T-cell (primary cell): ENCODE measurements at regions of chr11 and their contacts with region 1.

Region 1: GRCh38 chr11:128630367-128631230 is 43.2 kb upstream of the ETS1 start:
- DNase-seq: peak; percentile 71 to 97 (median 89)
- ATAC-seq: peak; percentile 73 to 84 (median 78)
- H3K4me3 ChIP-seq: no peak overlapping the region
- H3K4me3 Mint-ChIP-seq: peak overlapping the region; percentile 46 to 70 (median 53)
- H3K27ac ChIP-seq: peak overlapping the region; percentile 78
- H3K27ac Mint-ChIP-seq: peak overlapping the region; percentile 99 to 100
- H3K4me1 ChIP-seq: peaks cover 53 to 57% of the 10 kb centered on the region in 2 experiments
- H3K4me1 Mint-ChIP-seq: peaks cover 65 to 71% (median 68%) of the 10 kb centered on the region in 3 donors
- H3K27me3 ChIP-seq: no peaks in the 10 kb centered on the region
- H3K27me3 Mint-ChIP-seq: no peaks in the 10 kb centered on the region

Region 2: DNA sequence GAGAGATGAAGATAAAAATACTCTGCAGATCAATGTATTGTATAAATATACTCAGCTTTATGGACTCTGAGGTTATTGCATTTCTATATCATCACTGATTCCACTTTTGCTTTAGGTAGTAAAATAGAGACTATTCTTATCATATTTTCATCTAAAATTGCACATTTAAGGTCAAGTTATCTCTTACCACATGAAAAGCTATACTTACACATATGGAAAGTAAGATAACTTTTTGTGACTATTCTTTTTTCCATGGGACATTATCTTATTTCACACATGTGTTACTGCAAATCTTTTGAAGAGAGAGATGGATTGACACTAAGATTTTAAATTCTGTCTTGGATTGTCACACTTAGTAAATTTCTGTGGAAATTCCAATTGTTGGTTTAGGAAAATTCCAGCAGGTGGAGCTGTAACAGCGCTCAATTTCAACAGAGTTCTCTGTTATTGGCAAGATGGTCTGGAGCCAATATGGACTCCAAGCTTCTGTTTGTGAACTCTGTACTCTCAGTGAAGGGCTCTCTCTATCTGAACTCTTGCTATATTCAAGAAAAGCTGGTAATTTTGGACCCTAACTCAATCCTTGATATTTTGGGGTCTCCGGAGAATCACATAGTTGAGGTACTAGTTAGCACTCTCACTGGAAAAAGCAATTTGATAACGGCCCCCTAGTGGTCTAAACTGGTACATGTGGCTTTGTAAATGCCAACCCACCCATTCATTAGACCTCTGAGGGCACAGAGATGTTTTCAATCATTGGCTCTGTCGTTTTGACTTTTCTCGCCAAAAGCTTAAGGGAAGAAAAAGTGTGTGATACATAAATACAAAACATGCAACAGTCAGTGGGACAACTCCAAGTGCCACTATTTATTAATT is 472.9 kb before region 1 on chr11:
- CTCF ChIA-PET with region 1: interaction called, 4 to 13 read pairs
- POLR2A ChIA-PET with region 1: no interaction called
- DNase-seq: peak in 34 of 35 experiments; percentile 1 to 84 (median 42)
- ATAC-seq: peak; percentile 87 to 93 (median 88)
- H3K4me3 ChIP-seq: peak overlapping the region; percentile 25 to 32
- H3K4me3 Mint-ChIP-seq: peak overlapping the region; percentile 51 to 76 (median 59)
- H3K27ac ChIP-seq: no peak overlapping the region
- H3K27ac Mint-ChIP-seq: peak overlapping the region; percentile 65 to 75
- H3K4me1 ChIP-seq: no peaks in the 10 kb centered on the region
- H3K4me1 Mint-ChIP-seq: peaks cover 0 to 9% (median 3%) of the 10 kb centered on the region in 3 donors
- H3K27me3 ChIP-seq: no peaks in the 10 kb centered on the region
- H3K27me3 Mint-ChIP-seq: no peaks in the 10 kb centered on the region

Region 3: GRCh38 chr11:128290106-128290840 is 340.3 kb before region 1 on chr11:
- CTCF ChIA-PET with region 1: interaction called, 8 to 109 read pairs
- POLR2A ChIA-PET with region 1: interaction called, 3 to 4 read pairs
- DNase-seq: peak; percentile 55 to 94 (median 67)
- ATAC-seq: peak; percentile 71 to 75 (median 72)
- H3K4me3 ChIP-seq: peak overlapping the region; percentile 54 to 60
- H3K4me3 Mint-ChIP-seq: peak overlapping the region; percentile 87 to 91 (median 91)
- H3K27ac ChIP-seq: peak overlapping the region; percentile 99
- H3K27ac Mint-ChIP-seq: peak overlapping the region; percentile 98 to 100
- H3K4me1 ChIP-seq: peaks cover 58 to 67% of the 10 kb centered on the region in 2 experiments
- H3K4me1 Mint-ChIP-seq: peaks cover 93 to 100% (median 98%) of the 10 kb centered on the region in 3 donors
- H3K27me3 ChIP-seq: no peaks in the 10 kb centered on the region
- H3K27me3 Mint-ChIP-seq: no peaks in the 10 kb centered on the region

Region 4: DNA sequence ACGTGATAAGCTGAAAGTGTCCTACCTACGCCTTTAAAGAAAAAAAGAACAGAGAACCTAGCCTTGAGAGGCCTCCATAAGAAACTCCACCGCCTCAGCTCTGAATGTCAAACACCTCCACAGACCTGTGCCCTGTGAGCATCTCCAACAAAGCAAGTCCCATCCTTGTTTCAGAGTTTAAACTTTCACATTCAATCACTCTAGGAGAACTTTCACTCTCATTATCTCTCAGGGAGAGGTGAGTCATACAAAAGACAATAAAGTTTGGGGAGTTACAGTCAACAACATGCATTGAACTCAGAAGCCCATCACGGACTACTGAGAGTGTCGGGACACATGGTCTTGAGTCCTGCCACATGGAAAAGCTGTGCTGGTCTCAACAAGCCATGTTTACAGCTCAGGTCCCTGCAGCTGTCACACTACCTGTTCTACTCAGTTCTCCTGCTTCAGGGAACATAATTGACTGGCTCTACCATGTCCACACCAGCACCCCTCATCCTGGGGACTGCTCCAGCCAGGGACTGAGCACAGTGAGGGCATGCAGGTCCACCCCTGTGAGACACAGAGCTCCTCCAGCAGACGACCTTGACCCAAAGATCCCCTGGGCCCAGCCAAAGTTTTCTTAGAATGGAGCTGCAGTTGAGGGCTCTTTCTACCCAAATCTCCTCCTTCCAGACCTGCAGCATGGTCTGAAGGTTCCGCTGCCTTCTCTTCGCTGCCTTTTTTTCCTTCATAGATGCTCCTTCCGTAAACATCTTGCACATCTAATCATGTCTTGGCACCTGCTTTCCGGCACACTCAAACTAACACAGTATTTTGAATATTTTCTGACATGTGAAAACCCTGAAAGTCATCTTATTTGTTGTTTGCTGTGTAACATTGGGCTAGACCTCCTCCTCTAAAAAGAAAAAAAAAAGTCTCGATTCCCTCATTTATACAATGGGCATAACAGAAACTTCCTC is 158.2 kb before region 1 on chr11:
- CTCF ChIA-PET with region 1: interaction called in 1 of 2 experiments, 15 read pairs
- POLR2A ChIA-PET with region 1: interaction called in 1 of 2 experiments, 3 read pairs
- DNase-seq: peak in 4 of 35 experiments; percentile 42 to 70 (median 52)
- ATAC-seq: peak; percentile 12 to 43 (median 30)
- H3K4me3 ChIP-seq: peak overlapping the region; percentile 18 to 42
- H3K4me3 Mint-ChIP-seq: peak overlapping the region; percentile 62 to 99 (median 66)
- H3K27ac ChIP-seq: peak overlapping the region; percentile 96
- H3K27ac Mint-ChIP-seq: peak overlapping the region; percentile 93 to 98
- H3K4me1 ChIP-seq: peaks cover 83 to 86% of the 10 kb centered on the region in 2 experiments
- H3K4me1 Mint-ChIP-seq: peaks cover 100% of the 10 kb centered on the region in 3 donors
- H3K27me3 ChIP-seq: no peaks in the 10 kb centered on the region
- H3K27me3 Mint-ChIP-seq: no peaks in the 10 kb centered on the region

Region 5: GRCh38 chr11:128522055-128522942 is 108.3 kb before region 1 on chr11:
- CTCF ChIA-PET with region 1: interaction called, 7 to 76 read pairs
- POLR2A ChIA-PET with region 1: interaction called, 4 to 23 read pairs
- DNase-seq: peak; percentile 70 to 93 (median 80)
- ATAC-seq: peak; percentile 76 to 82 (median 80)
- H3K4me3 ChIP-seq: peak overlapping the region; percentile 68 to 99
- H3K4me3 Mint-ChIP-seq: peak overlapping the region; percentile 96 to 99 (median 98)
- H3K27ac ChIP-seq: peak overlapping the region; percentile 93
- H3K27ac Mint-ChIP-seq: peak overlapping the region; percentile 98
- H3K4me1 ChIP-seq: peaks cover 37 to 40% of the 10 kb centered on the region in 2 experiments
- H3K4me1 Mint-ChIP-seq: peaks cover 45 to 65% (median 50%) of the 10 kb centered on the region in 3 donors
- H3K27me3 ChIP-seq: no peaks in the 10 kb centered on the region
- H3K27me3 Mint-ChIP-seq: no peaks in the 10 kb centered on the region

Region 6: DNA sequence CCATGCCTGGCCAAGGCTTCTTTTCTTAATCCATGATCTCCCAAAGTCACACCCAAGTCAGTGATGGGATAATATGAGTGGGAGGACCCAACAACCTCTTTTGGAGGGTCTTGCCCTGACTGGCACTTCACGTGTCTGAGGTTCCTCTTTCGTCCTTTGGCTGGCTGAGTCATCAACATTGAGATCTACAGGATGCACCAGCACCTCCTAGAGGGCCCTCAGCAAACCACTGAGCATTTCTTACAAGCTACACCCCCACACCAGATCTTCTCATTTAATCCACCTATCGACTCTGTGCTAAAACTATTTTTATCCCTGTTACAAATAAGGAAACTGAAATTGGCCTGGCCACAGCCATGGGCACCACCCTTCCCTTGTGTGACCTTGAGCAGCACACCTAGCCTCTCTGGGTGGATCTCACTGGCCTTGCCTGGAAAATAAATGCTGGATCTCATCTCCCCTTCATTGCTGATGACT is 126.7 kb after region 1 on chr11:
- CTCF ChIA-PET with region 1: interaction called, 4 to 14 read pairs
- POLR2A ChIA-PET with region 1: no interaction called
- DNase-seq: peak; percentile 15 to 86 (median 66)
- ATAC-seq: peak; percentile 90 to 98 (median 91)
- H3K4me3 ChIP-seq: no peak overlapping the region
- H3K4me3 Mint-ChIP-seq: peak overlapping the region in 1 of 3 donors; percentile 62
- H3K27ac ChIP-seq: peak overlapping the region; percentile 33
- H3K27ac Mint-ChIP-seq: peak overlapping the region; percentile 82 to 90
- H3K4me1 ChIP-seq: peaks cover 29 to 63% of the 10 kb centered on the region in 2 experiments
- H3K4me1 Mint-ChIP-seq: peaks cover 85 to 87% (median 85%) of the 10 kb centered on the region in 3 donors
- H3K27me3 ChIP-seq: no peaks in the 10 kb centered on the region
- H3K27me3 Mint-ChIP-seq: no peaks in the 10 kb centered on the region

Region 7: DNA sequence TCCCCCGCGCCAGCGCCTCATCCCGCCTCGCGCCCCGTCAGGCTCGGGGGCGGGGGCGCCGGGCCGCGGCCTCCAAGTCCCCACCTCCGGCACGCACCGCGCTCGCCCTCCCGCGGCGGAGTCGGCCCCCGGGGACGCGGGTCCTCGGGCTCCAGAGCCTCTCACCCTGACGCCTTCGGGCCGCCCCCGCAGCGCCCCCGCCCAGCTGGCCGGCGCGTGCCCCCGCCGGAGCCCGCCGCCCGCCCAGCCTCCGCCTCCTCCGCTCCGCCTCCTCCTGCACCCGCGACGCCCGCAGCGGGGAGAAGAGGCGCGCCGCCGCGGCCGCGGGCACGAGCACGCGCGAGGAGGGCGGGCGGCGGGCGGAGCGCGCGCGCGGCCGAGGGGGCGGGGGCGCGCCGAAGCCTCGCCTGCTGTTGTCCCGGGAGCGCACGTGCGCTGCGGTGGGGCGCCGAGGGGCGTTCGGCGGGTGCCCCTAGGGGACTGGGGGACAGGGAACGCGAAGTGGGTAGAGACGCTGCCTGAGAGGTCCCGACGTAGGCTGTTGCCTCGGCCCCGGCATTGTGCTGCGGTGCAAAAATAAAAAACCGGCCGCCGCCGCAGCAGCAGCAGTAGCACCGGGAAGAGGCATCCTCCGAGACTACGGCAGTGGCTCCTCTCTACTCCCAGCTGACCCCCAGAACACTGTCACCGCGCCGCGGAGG is 648.9 kb after region 1 on chr11:
- CTCF ChIA-PET with region 1: no interaction called
- POLR2A ChIA-PET with region 1: no interaction called
- DNase-seq: peak; percentile 36 to 84 (median 65)
- ATAC-seq: peak; percentile 82 to 84 (median 82)
- H3K4me3 ChIP-seq: peak overlapping the region; percentile 61 to 70
- H3K4me3 Mint-ChIP-seq: peak overlapping the region; percentile 77 to 88 (median 79)
- H3K27ac ChIP-seq: no peak overlapping the region
- H3K27ac Mint-ChIP-seq: peak overlapping the region; percentile 63 to 74
- H3K4me1 ChIP-seq: peaks cover 13 to 15% of the 10 kb centered on the region in 2 experiments
- H3K4me1 Mint-ChIP-seq: peaks cover 28 to 42% (median 37%) of the 10 kb centered on the region in 3 donors
- H3K27me3 ChIP-seq: peaks cover 0 to 16% of the 10 kb centered on the region in 2 experiments
- H3K27me3 Mint-ChIP-seq: peaks cover 0 to 34% of the 10 kb centered on the region in 2 donors